Endothelial cell of umbilical vein (primary cell): ENCODE measurements at regions of chr5 and their contacts with region 1.

Region 1: GRCh38 chr5:37412515-37413277 is 33.6 kb downstream of the WDR70 start:
- DNase-seq: peak; percentile 87
- H3K4me3 ChIP-seq: no peak overlapping the region
- H3K27ac ChIP-seq: no peak overlapping the region
- H3K4me1 ChIP-seq: no peaks in the 10 kb centered on the region
- H3K27me3 ChIP-seq: no peaks in the 10 kb centered on the region
- CTCF ChIP-seq: peak; percentile 73 to 91
- POLR2A ChIP-seq: no peak

Region 2: DNA sequence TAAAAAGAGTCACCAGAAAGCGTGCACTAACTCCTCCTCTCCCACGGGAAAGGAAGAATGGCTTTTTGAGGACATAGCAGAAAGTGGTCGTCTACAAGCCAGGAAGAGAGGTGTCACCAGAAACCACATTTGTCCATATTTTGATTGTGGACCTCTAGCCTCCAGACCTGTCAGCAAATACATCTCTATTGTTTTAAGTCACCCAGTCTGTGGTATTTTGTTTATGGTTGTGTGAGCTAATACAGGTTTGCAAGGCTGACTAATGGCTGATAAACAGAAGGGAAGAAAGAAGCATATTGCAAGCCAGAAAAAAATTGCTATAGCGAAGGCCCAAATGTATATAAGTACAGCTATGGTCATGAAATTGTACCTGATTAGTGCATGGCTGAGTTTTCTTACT is 12.2 kb before region 1 on chr5:
- CTCF ChIA-PET with region 1: interaction called, 27 read pairs
- POLR2A ChIA-PET with region 1: no interaction called
- dilution Hi-C with region 1: no loop called
- intact Hi-C with region 1: no loop called
- DNase-seq: no peak
- H3K4me3 ChIP-seq: no peak overlapping the region
- H3K27ac ChIP-seq: no peak overlapping the region
- H3K4me1 ChIP-seq: no peaks in the 10 kb centered on the region
- H3K27me3 ChIP-seq: no peaks in the 10 kb centered on the region
- CTCF ChIP-seq: no peak
- POLR2A ChIP-seq: no peak

Region 3: DNA sequence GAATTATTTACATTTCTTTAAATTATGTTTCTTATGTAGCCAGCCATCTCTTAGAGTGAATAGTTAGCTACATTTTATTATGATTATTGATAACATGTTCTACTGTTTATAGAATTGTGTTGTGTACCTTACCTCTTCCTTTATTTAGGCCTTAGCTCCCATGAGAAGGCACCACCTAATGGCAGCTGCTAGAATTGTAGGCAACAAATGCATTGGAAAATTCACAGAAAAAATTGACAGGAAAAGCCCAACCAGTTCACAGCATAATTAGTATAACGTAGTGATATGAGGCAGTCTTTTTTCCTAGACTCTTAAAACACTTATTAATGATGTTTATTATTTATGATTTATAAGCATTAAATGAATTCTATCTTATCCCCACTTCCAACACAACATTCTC is 142.2 kb after region 1 on chr5:
- CTCF ChIA-PET with region 1: interaction called, 33 read pairs
- POLR2A ChIA-PET with region 1: no interaction called
- dilution Hi-C with region 1: no loop called
- intact Hi-C with region 1: loop called (anchors 1 kb)
- DNase-seq: peak; percentile 22
- H3K4me3 ChIP-seq: no peak overlapping the region
- H3K27ac ChIP-seq: no peak overlapping the region
- H3K4me1 ChIP-seq: peaks cover 24% of the 10 kb centered on the region
- H3K27me3 ChIP-seq: no peaks in the 10 kb centered on the region
- CTCF ChIP-seq: peak; percentile 18 to 27
- POLR2A ChIP-seq: no peak

Region 4: DNA sequence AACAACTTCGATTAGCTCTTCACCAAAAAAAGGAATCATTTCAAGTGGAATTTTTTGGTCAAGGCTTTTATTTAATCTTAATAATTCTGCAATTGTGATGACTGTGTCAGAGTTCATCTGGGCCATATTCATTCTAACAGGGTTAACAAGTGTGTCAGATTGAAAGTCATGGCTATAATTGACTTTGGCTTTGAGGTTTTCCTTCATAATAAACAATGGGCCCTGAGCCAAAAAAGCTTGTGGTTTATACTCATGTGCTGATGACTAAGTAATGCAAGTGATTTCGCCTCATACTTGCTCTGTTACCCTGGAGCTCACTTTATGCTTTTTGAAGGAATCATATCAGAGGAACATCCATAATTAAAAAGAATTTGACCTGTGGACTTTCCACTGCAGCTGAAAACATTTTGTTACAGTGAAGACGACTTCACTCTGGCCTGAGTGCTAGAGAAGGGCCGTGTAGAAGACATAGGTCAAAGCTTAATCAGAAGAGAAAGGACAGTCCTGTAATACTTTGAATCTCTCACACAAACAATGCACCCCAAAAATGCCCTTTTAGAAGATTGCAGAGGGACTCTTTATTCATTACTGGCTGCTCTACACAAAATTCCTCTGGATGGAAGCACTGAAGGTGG is 325.5 kb after region 1 on chr5:
- CTCF ChIA-PET with region 1: interaction called, 16 read pairs
- POLR2A ChIA-PET with region 1: no interaction called
- dilution Hi-C with region 1: no loop called
- intact Hi-C with region 1: no loop called
- DNase-seq: peak; percentile 95
- H3K4me3 ChIP-seq: no peak overlapping the region
- H3K27ac ChIP-seq: peak overlapping the region; percentile 42
- H3K4me1 ChIP-seq: peaks cover 19% of the 10 kb centered on the region
- H3K27me3 ChIP-seq: no peaks in the 10 kb centered on the region
- CTCF ChIP-seq: no peak
- POLR2A ChIP-seq: no peak

Region 5: GRCh38 chr5:37837414-37838032 is 424.8 kb after region 1 on chr5:
- CTCF ChIA-PET with region 1: interaction called, 23 read pairs
- POLR2A ChIA-PET with region 1: no interaction called
- dilution Hi-C with region 1: no loop called
- intact Hi-C with region 1: loop called (anchors 1 kb)
- DNase-seq: peak; percentile 57
- H3K4me3 ChIP-seq: peak overlapping the region in 1 of 3 experiments; percentile 14
- H3K27ac ChIP-seq: no peak overlapping the region
- H3K4me1 ChIP-seq: peaks cover 24% of the 10 kb centered on the region
- H3K27me3 ChIP-seq: peaks cover 84 to 96% of the 10 kb centered on the region in 2 experiments
- CTCF ChIP-seq: peak; percentile 68 to 86
- POLR2A ChIP-seq: no peak

Region 6: GRCh38 chr5:38193015-38193581 is 780.4 kb after region 1 on chr5:
- CTCF ChIA-PET with region 1: interaction called, 79 read pairs
- POLR2A ChIA-PET with region 1: no interaction called
- dilution Hi-C with region 1: no loop called
- intact Hi-C with region 1: loop called (anchors 1 kb)
- DNase-seq: peak; percentile 57
- H3K4me3 ChIP-seq: no peak overlapping the region
- H3K27ac ChIP-seq: no peak overlapping the region
- H3K4me1 ChIP-seq: no peaks in the 10 kb centered on the region
- H3K27me3 ChIP-seq: peaks cover 10 to 28% of the 10 kb centered on the region in 2 experiments
- CTCF ChIP-seq: peak; percentile 82 to 89
- POLR2A ChIP-seq: no peak